A549 (cell line): ENCODE measurements at regions of chr1 and their contacts with region 1.

Region 1: GRCh38 chr1:206489980-206490770 is 17.2 kb upstream of the RASSF5 start:
- DNase-seq: peak; percentile 71 to 93
- ATAC-seq: peak; percentile 90 to 97
- H3K4me3 ChIP-seq: no peak overlapping the region
- H3K27ac ChIP-seq: no peak overlapping the region
- H3K4me1 ChIP-seq: no peaks in the 10 kb centered on the region
- CTCF ChIP-seq: peak; percentile 89
- EP300 ChIP-seq: no peak
- POLR2A ChIP-seq: no peak
- RAD21 ChIP-seq: peak; percentile 84 to 93

Region 2: GRCh38 chr1:206469933-206470691 is 20.1 kb before region 1 on chr1 and contains the start of gene IKBKE:
- CTCF ChIA-PET with region 1: interaction called, 11 read pairs
- POLR2A ChIA-PET with region 1: no interaction called
- DNase-seq: peak; percentile 67 to 96
- ATAC-seq: peak; percentile 79 to 93
- H3K4me3 ChIP-seq: peak within 1 kb of the TSS; percentile 63
- H3K27ac ChIP-seq: peak within 1 kb of the TSS; percentile 76 to 93
- H3K4me1 ChIP-seq: peaks cover 21% of the 10 kb centered on the region
- CTCF ChIP-seq: no peak
- EP300 ChIP-seq: no peak
- POLR2A ChIP-seq: peak; percentile 61
- RAD21 ChIP-seq: no peak
- polyA plus RNA-seq, gene IKBKE: 6.3 and 6.4 TPM in 2 replicates

Region 3: GRCh38 chr1:206507284-206508129 is 17.3 kb after region 1 on chr1 and contains the start of gene RASSF5:
- CTCF ChIA-PET with region 1: interaction called, 121 read pairs
- POLR2A ChIA-PET with region 1: no interaction called
- DNase-seq: peak; percentile 55 to 73
- ATAC-seq: peak; percentile 80 to 90
- H3K4me3 ChIP-seq: peak within 1 kb of the TSS; percentile 55
- H3K27ac ChIP-seq: peak within 1 kb of the TSS; percentile 19 to 85; a peak in 5 of 6 replicates
- H3K4me1 ChIP-seq: peaks cover 16% of the 10 kb centered on the region
- CTCF ChIP-seq: no peak
- EP300 ChIP-seq: no peak
- POLR2A ChIP-seq: peak; percentile 86
- RAD21 ChIP-seq: no peak
- polyA plus RNA-seq, gene RASSF5: 2.0 and 2.2 TPM in 2 replicates

Region 4: GRCh38 chr1:206544562-206545257 is 54.5 kb after region 1 on chr1:
- CTCF ChIA-PET with region 1: interaction called, 24 read pairs
- POLR2A ChIA-PET with region 1: no interaction called
- DNase-seq: peak; percentile 57 to 79
- ATAC-seq: peak; percentile 92 to 96
- H3K4me3 ChIP-seq: no peak overlapping the region
- H3K27ac ChIP-seq: no peak overlapping the region
- H3K4me1 ChIP-seq: no peaks in the 10 kb centered on the region
- CTCF ChIP-seq: peak; percentile 85
- EP300 ChIP-seq: no peak
- POLR2A ChIP-seq: no peak
- RAD21 ChIP-seq: peak; percentile 64 to 72

Region 5: DNA sequence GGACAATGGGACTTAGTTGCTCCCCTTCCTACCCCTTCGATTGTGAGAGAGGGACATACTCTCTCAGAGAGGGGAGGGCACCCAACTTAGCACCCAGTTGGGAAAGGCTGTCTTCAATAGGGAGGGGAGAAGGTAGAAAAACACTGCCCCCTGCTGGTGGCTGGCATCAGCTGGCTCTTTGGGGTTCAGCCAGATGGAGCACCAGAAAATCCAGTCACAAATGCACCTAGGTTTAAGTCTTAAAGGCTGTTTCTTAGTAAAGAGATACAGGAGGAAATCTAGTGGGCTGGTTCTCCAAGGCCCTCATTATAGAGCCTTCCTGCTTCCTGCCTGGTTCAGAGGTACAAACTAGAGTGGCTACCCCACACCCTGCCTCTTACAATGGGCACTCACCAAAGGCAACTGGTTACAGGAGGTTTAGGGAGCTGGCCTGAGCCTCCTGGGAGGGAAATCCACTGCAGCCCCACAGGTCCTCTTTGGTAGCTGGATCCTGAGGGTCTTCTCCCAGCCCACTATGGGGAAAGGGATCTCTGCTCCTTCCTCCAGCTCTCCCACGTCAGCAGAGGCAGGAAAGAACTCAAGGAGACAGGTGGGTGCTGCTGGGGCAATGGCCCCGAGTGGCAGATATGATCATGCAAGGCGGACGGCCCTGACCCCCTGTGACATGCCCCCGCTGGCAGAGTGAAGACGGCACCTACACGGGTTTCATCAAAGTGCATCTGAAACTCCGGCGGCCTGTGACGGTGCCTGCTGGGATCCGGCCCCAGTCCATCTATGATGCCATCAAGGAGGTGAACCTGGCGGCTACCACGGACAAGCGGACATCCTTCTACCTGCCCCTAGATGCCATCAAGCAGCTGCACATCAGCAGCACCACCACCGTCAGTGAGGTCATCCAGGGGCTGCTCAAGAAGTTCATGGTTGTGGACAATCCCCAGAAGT is 93.8 kb after region 1 on chr1:
- CTCF ChIA-PET with region 1: interaction called, 188 read pairs
- POLR2A ChIA-PET with region 1: no interaction called
- DNase-seq: peak; percentile 62 to 72
- ATAC-seq: peak; percentile 79 to 92
- H3K4me3 ChIP-seq: no peak overlapping the region
- H3K27ac ChIP-seq: no peak overlapping the region
- H3K4me1 ChIP-seq: no peaks in the 10 kb centered on the region
- CTCF ChIP-seq: peak; percentile 94
- EP300 ChIP-seq: no peak
- POLR2A ChIP-seq: no peak
- RAD21 ChIP-seq: peak; percentile 86 to 93

Region 6: GRCh38 chr1:206600527-206600926 is 110.4 kb after region 1 on chr1:
- CTCF ChIA-PET with region 1: interaction called, 44 read pairs
- POLR2A ChIA-PET with region 1: no interaction called
- DNase-seq: no peak
- ATAC-seq: no peak
- H3K4me3 ChIP-seq: no peak overlapping the region
- H3K27ac ChIP-seq: no peak overlapping the region
- H3K4me1 ChIP-seq: no peaks in the 10 kb centered on the region
- CTCF ChIP-seq: no peak
- EP300 ChIP-seq: no peak
- POLR2A ChIP-seq: no peak
- RAD21 ChIP-seq: no peak

Region 7: DNA sequence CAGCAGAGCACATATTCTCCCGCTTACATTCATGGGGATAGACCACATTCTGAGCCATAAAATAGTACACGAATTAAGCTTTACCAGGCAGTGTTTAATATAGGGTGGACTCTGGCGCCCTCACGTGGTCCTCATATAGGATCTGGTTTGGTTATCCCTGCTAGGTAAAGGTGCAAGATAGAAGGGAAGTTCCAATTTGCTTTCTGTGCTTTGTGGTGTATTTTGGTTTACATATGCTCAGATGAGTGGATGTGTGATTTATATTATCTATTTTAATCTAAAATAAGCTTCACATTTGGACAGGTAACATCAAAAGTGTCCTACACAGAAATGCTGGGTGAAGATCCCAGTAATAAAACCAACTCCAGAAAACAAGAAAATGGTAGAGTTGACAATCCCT is 1009.4 kb after region 1 on chr1:
- CTCF ChIA-PET with region 1: interaction called, 10 read pairs
- POLR2A ChIA-PET with region 1: no interaction called
- DNase-seq: peak; percentile 55 to 69
- ATAC-seq: peak; percentile 89 to 92
- H3K4me3 ChIP-seq: no peak overlapping the region
- H3K27ac ChIP-seq: no peak overlapping the region
- H3K4me1 ChIP-seq: no peaks in the 10 kb centered on the region
- CTCF ChIP-seq: peak; percentile 92
- EP300 ChIP-seq: no peak
- POLR2A ChIP-seq: no peak
- RAD21 ChIP-seq: peak; percentile 92 to 95